ENCODE measurements at regions of chr4 and their contacts with region 1.

Region 1: DNA sequence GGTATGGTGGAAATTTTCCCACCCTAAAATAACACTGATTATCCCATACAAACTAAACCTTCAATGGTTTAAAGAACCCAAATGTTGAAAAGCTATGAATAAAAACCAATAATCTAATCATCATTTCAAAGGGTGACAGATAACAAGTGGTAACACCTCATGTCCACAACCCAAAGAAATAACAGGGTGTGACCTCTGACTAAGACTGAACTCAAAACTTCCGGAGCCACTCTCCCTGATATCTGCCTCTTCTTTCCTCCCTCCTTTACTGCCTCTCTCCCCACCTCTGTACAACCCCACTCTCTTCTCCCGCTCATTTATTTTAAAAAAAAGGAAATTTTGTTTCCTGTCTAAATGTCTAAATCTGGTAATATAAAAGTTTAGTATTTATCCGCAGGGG is 11.5 kb downstream of the FBXW7 start:
- DNase-seq: no peak
- H3K4me3 Mint-ChIP-seq: no peak overlapping the region
- H3K27ac Mint-ChIP-seq: no peak overlapping the region
- H3K4me1 Mint-ChIP-seq: peaks cover 39% of the 10 kb centered on the region
- H3K27me3 Mint-ChIP-seq: no peaks in the 10 kb centered on the region

Region 2: GRCh38 chr4:152500800-152501434 is 23.5 kb before region 1 on chr4:
- CTCF ChIA-PET with region 1: interaction called, 10 read pairs
- POLR2A ChIA-PET with region 1: no interaction called
- DNase-seq: peak; percentile 90
- H3K4me3 Mint-ChIP-seq: no peak overlapping the region
- H3K27ac Mint-ChIP-seq: no peak overlapping the region
- H3K4me1 Mint-ChIP-seq: peaks cover 24% of the 10 kb centered on the region
- H3K27me3 Mint-ChIP-seq: no peaks in the 10 kb centered on the region

Region 3: GRCh38 chr4:152510349-152511147 is 13.9 kb before region 1 on chr4:
- CTCF ChIA-PET with region 1: interaction called, 10 read pairs
- POLR2A ChIA-PET with region 1: no interaction called
- DNase-seq: no peak
- H3K4me3 Mint-ChIP-seq: peak overlapping the region; percentile 26
- H3K27ac Mint-ChIP-seq: no peak overlapping the region
- H3K4me1 Mint-ChIP-seq: peaks cover 42% of the 10 kb centered on the region
- H3K27me3 Mint-ChIP-seq: no peaks in the 10 kb centered on the region

Region 4: DNA sequence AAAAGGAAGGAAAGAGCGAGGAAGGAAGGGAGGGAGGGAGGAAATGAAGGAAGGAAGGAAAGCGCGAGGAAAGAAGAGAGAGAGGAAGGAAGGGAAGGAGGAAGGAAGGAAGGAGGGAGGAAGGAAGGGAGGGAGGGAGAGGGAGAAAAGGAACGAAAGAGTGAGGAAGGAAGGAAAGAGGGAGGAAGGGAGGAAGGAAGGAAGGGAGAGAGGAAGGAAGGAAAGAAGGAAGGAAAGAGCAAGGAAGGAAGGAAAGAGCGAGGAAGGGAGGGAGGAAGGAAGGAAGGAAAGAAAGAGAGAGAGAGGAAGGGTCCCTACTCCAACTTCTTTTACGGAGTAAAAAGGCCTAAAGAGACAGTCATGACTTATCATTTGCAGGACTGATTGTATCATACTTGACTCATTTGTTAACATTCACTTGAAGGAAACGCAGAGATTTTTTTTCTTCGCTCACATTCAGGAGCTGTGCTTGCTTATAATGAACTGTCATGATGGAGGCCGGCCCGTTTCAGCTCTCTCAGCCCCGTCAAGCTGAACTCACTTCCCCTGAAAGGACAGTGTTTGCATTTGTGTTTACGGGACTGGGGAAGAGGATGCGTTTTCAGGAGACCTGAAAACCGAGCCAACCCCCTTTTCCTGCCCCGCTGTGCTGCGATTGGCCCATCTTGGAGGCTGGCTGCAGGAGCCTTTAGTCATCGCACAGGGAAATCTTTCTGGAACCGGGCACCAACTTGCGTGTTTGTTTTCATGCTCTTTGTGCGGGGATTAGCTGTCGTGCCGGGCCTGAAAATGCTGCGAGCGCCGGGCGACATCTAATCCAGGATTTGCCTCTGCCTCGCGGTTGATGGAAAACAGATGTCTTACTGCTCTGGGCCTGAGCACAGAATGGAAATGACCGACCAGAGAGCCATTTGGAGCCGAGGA is 697.6 kb after region 1 on chr4:
- CTCF ChIA-PET with region 1: no interaction called
- POLR2A ChIA-PET with region 1: no interaction called
- DNase-seq: peak; percentile 11
- H3K4me3 Mint-ChIP-seq: peak overlapping the region; percentile 75
- H3K27ac Mint-ChIP-seq: peak overlapping the region; percentile 42
- H3K4me1 Mint-ChIP-seq: peaks cover 33% of the 10 kb centered on the region
- H3K27me3 Mint-ChIP-seq: peaks cover 52% of the 10 kb centered on the region

Measured in activated CD4-positive, alpha-beta T cell treated with anti-CD3 and anti-CD28 coated beads, Interleukin-2, amount 10 ng/mL, durations not matched to agents 7 days and 5 days (primary cell).